Left colon (tissue), 2 donors: ENCODE measurements at regions of chr4 and their contacts with region 1.

Region 1: DNA sequence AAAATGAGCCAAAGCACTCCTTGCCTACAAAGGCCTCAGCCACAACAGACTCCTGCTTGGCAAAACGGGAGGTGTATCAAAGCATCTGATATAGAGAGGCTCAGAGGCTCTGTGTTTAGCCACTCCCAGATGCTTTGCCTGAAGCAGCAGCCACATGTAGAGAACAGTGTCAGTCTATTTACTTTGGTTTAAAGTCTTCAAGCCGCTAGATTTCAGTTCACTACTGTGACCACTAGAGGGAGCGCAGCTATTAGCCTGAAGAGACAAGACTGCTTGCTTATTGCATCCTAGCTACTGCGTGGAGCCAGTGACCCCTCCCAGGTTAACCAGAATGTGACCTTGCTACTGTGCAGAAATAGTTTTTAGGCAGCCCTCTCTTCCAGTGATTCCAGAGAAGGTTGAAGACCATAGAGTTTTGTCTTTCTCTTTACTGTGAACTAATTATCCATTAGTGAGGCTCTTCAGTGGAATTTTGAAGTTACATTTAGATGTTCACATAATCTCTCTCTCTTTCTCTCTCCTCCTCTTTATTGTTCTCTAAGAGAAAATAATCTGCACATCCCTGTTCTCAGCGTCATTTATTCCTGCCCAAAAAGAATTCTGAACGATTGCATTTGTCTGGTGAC is 39.3 kb downstream of the BMP3 start:
- DNase-seq: peak; percentile 53 to 58
- ATAC-seq: peak; percentile 90

Region 2: DNA sequence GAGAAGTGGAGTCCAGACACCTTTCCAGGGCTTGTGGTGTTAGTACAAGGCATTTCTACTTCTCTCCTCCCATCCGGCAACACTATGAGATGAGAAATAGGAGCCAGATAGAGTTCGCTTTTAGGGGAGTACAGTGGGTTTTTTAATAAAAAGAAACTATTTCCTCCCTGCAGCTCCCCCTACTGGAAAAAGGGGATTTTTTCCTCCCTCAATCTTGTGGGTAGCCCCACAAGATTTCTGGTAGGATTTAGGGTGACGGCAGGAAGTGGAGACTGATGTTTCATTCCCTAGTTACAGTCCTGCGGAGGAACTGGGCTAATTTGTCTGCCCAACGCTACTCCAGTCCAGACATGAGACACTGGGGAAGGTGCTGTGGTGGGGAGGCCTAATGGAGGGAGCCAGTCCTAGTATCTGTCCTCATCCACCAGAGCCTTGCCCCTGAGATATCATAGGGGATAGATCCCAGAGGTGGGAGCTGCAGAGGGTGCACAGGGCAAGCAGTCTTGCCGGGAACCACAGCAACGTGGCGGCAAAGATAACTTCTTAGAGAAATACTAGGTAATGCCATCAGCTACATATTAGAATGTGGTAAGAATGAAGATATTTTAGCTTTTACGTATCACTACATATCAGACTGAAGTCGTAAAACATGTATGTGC is 190.8 kb after region 1 on chr4:
- intact Hi-C with region 1: loop called in 1 of 2 experiments (anchors 10 kb)
- DNase-seq: no peak
- ATAC-seq: no peak

Region 3: DNA sequence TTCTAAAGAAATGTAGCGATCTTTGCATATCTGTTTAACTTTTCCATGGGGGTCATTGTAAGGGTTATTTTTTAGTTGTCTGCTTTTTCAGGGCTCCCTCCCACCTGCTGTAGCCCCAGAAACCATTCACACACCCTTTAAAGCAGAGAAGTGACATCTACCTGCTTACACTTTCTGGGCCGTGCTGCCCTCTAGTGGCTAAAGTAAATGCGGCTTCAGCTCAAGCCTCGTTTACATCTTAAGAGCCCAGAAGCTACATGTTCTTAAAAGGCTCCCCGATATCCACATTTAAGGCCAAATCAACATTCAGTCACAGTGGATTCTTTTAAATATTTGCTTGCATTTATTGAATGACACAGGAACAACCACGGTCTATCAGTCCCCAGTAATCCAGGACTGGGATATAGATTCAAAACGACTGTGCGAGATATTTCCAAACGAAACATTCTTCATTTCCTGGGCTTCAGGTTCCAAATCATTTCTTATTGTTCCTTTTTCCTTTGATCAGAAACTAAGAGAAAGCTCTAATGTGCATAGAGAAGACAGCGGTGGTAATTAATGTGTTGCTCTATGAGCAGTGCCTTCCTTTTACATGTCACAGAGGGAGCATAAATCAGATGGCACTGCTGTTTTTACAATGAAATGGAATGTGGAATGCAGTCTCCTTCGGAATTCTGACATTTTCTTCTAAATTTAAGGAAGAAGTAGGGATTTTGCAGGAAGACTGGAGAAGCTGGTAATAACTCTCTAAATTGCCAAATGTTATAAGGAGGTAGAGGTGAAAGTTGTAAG is 282.0 kb after region 1 on chr4:
- intact Hi-C with region 1: loop called in 1 of 2 experiments (anchors 5 kb)
- DNase-seq: peak; percentile 40 to 81
- ATAC-seq: peak; percentile 80